MCF 10A (cell line): ENCODE measurements at regions of chr7 and their contacts with region 1.

Region 1: GRCh38 chr7:29328811-29329210 is 134.2 kb downstream of the CHN2 start:
- DNase-seq: peak; percentile 73
- H3K4me3 Mint-ChIP-seq: no peak overlapping the region
- H3K27ac Mint-ChIP-seq: peak overlapping the region; percentile 89
- H3K4me1 Mint-ChIP-seq: peaks cover 20% of the 10 kb centered on the region
- H3K27me3 Mint-ChIP-seq: no peaks in the 10 kb centered on the region
- CTCF ChIP-seq: no peak

Region 2: DNA sequence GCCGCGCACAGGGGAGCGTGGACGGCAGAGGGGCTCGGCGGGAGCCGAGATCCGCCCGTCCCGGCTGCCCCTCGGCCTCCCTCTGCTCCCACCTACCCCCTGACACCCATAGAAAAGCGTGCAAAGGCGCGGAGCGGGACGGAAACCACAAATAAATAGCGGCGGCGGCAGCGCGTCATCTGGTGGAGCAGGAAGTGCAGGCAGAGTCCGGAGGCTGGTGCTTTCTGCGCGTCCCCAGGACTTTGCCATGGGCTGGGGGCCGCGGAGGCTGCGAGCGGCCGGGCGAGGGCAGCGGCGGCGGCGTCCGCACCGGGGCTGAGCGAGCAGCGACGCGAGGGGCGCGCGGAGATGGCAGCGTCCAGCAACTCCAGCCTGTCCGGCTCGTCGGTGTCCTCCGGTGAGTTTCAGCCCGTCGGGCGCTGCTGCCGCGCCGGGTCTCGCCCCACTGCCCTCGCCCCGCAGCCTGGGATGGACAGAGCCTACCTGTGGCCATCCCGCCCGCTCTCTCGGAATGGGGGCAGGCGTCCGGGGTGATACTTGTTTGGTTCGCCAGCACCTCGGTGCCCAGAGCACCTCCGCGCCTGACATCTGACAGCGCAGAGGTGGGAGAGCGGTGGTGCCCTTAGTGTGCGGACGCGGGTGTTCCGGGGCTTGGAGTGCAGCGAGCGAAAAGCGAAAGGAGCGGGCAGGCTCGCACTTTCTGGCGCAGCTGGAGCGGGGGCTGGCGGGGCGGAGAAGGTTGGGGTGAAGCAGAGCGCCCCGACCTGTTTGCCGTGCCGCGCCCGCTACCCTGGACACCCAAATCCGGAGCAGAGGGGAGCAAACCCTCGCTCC is 134.0 kb before region 1 on chr7 and contains the start of gene CHN2:
- CTCF ChIA-PET with region 1: interaction called, 4 read pairs
- POLR2A ChIA-PET with region 1: interaction called, 3 read pairs
- intact Hi-C with region 1: loop called (anchors 5 kb)
- DNase-seq: peak; percentile 55
- H3K4me3 Mint-ChIP-seq: peak within 1 kb of the TSS; percentile 75
- H3K27ac Mint-ChIP-seq: no peak within 1 kb of the TSS
- H3K4me1 Mint-ChIP-seq: no peaks in the 10 kb centered on the region
- H3K27me3 Mint-ChIP-seq: no peaks in the 10 kb centered on the region
- CTCF ChIP-seq: no peak
- total RNA-seq, gene CHN2: 5.1 and 8.0 TPM in 2 replicates

Region 3: DNA sequence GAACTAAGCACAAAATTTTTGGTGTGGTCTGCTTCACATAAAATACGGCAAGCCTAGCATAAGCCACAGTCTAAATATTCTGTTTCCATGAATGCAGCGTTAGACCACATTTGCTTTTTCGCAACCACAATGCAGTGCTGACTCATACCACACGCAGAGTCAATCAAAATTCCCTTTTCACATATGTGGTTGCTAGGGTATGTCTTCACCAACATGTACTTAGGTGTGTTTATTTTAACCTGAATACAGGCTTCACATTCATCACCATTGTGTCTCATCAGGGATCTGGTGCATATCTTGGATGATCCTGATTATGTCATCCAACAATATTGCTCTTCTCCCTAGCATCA is 43.4 kb before region 1 on chr7:
- CTCF ChIA-PET with region 1: interaction called, 3 read pairs
- POLR2A ChIA-PET with region 1: interaction called, 18 read pairs
- intact Hi-C with region 1: loop called (anchors 1 kb)
- DNase-seq: peak; percentile 93
- H3K4me3 Mint-ChIP-seq: peak overlapping the region; percentile 51
- H3K27ac Mint-ChIP-seq: peak overlapping the region; percentile 91
- H3K4me1 Mint-ChIP-seq: peaks cover 58% of the 10 kb centered on the region
- H3K27me3 Mint-ChIP-seq: no peaks in the 10 kb centered on the region
- CTCF ChIP-seq: no peak

Region 4: GRCh38 chr7:29345600-29345999 is 16.8 kb after region 1 on chr7:
- CTCF ChIA-PET with region 1: interaction called, 3 read pairs
- POLR2A ChIA-PET with region 1: interaction called, 14 read pairs
- intact Hi-C with region 1: no loop called
- DNase-seq: peak; percentile 43
- H3K4me3 Mint-ChIP-seq: no peak overlapping the region
- H3K27ac Mint-ChIP-seq: no peak overlapping the region
- H3K4me1 Mint-ChIP-seq: peaks cover 19% of the 10 kb centered on the region
- H3K27me3 Mint-ChIP-seq: no peaks in the 10 kb centered on the region
- CTCF ChIP-seq: peak; percentile 63